Activated CD8-positive, alpha-beta memory T cell treated with anti-CD3 and anti-CD28 coated beads, Interleukin-2, amount 10 ng/mL, durations not matched to agents 7 days and 5 days (primary cell): ENCODE measurements at regions of chr17 and their contacts with region 1.

Region 1: GRCh38 chr17:39244600-39245570 is 19.1 kb upstream of the STAC2 start:
- DNase-seq: peak; percentile 91
- ATAC-seq: peak; percentile 90
- H3K4me3 Mint-ChIP-seq: no peak overlapping the region
- H3K27ac Mint-ChIP-seq: no peak overlapping the region
- H3K4me1 Mint-ChIP-seq: peaks cover 13% of the 10 kb centered on the region
- H3K27me3 Mint-ChIP-seq: no peaks in the 10 kb centered on the region

Region 2: GRCh38 chr17:39199820-39200069 is 45.1 kb before region 1 on chr17:
- CTCF ChIA-PET with region 1: interaction called, 670 read pairs
- DNase-seq: peak; percentile 95
- ATAC-seq: peak; percentile 62
- H3K4me3 Mint-ChIP-seq: peak overlapping the region; percentile 89
- H3K27ac Mint-ChIP-seq: peak overlapping the region; percentile 99
- H3K4me1 Mint-ChIP-seq: peaks cover 57% of the 10 kb centered on the region
- H3K27me3 Mint-ChIP-seq: no peaks in the 10 kb centered on the region

Region 3: GRCh38 chr17:39261286-39261685 is 16.4 kb after region 1 on chr17:
- CTCF ChIA-PET with region 1: interaction called, 12 read pairs
- DNase-seq: no peak
- ATAC-seq: no peak
- H3K4me3 Mint-ChIP-seq: no peak overlapping the region
- H3K27ac Mint-ChIP-seq: no peak overlapping the region
- H3K4me1 Mint-ChIP-seq: no peaks in the 10 kb centered on the region
- H3K27me3 Mint-ChIP-seq: no peaks in the 10 kb centered on the region

Region 4: GRCh38 chr17:39364626-39365025 is 119.7 kb after region 1 on chr17:
- CTCF ChIA-PET with region 1: no interaction called
- DNase-seq: no peak
- ATAC-seq: no peak
- H3K4me3 Mint-ChIP-seq: no peak overlapping the region
- H3K27ac Mint-ChIP-seq: no peak overlapping the region
- H3K4me1 Mint-ChIP-seq: peaks cover 2% of the 10 kb centered on the region
- H3K27me3 Mint-ChIP-seq: no peaks in the 10 kb centered on the region